ENCODE measurements at regions of chr10 and their contacts with region 1.

Region 1: DNA sequence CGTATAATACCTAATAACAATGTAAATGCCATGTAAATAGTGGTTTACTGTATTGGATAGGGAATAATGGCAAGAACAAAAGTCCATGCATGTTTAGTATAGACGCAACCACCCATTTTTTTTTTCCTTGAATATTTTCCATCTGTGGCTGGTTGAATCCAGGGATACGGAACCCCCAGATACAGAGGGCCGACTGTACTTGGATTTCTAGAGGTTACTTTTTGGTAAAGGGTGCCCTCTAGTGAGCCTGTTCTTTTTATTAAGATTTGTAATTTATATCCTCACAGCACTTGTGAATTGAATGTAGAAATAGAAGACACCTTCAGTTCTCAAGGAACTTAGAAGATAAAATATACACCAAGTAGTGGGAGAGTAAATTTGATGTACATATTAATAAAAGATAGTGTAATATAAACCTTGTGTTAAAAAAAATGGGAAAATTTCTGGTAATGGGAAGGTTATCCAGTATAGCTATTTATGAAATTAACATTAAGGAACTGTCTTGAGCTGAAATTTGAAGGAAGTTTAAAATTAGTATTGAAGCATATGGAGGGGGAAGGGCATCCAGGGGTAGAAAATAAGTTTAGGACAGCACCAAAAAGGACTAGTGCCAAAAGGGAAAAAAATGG is 32.0 kb downstream of the EXOC6 start:
- DNase-seq: no peak
- ATAC-seq: no peak
- H3K4me3 Mint-ChIP-seq: no peak overlapping the region
- H3K27ac Mint-ChIP-seq: no peak overlapping the region
- H3K4me1 Mint-ChIP-seq: peaks cover 27% of the 10 kb centered on the region
- H3K27me3 Mint-ChIP-seq: no peaks in the 10 kb centered on the region

Region 2: GRCh38 chr10:92517034-92517655 is 363.2 kb before region 1 on chr10:
- CTCF ChIA-PET with region 1: no interaction called
- POLR2A ChIA-PET with region 1: no interaction called
- intact Hi-C with region 1: loop called (anchors 1 to 5 kb)
- DNase-seq: peak; percentile 77
- ATAC-seq: peak; percentile 92
- H3K4me3 Mint-ChIP-seq: no peak overlapping the region
- H3K27ac Mint-ChIP-seq: no peak overlapping the region
- H3K4me1 Mint-ChIP-seq: peaks cover 6% of the 10 kb centered on the region
- H3K27me3 Mint-ChIP-seq: no peaks in the 10 kb centered on the region

Region 3: GRCh38 chr10:92839191-92840085 is 40.9 kb before region 1 on chr10:
- CTCF ChIA-PET with region 1: interaction called, 24 read pairs
- POLR2A ChIA-PET with region 1: interaction called, 3 read pairs
- intact Hi-C with region 1: loop called (anchors 1 kb)
- DNase-seq: peak; percentile 84
- ATAC-seq: peak; percentile 77
- H3K4me3 Mint-ChIP-seq: no peak overlapping the region
- H3K27ac Mint-ChIP-seq: no peak overlapping the region
- H3K4me1 Mint-ChIP-seq: peaks cover 2% of the 10 kb centered on the region
- H3K27me3 Mint-ChIP-seq: no peaks in the 10 kb centered on the region

Region 4: DNA sequence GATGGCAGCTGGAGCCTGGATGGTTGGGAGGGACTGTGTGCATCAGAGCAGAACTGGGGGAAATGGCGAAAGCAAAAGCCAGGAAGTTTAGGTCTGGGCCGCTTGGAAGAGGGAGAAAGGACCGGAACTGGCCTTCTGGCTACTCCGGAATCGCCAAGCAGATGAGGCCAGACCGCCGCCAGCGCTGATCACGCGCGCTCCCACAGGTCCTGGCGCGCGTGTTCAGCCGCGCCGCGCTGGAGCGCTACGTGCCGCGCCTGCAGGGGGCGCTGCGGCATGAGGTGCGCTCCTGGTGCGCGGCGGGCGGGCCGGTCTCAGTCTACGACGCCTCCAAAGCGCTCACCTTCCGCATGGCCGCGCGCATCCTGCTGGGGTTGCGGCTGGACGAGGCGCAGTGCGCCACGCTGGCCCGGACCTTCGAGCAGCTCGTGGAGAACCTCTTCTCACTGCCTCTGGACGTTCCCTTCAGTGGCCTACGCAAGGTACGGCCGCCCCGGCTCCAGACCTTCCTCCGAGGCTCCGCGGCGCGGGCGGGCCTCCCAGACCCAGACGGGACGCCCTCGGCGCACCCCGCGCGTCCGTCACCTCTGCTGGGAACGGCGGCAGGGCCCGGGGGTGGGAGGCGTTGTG is 182.3 kb after region 1 on chr10:
- CTCF ChIA-PET with region 1: no interaction called
- POLR2A ChIA-PET with region 1: no interaction called
- intact Hi-C with region 1: loop called in 1 of 2 experiments (anchors 10 kb)
- DNase-seq: peak; percentile 81
- ATAC-seq: peak; percentile 91
- H3K4me3 Mint-ChIP-seq: peak overlapping the region; percentile 66
- H3K27ac Mint-ChIP-seq: no peak overlapping the region
- H3K4me1 Mint-ChIP-seq: peaks cover 21% of the 10 kb centered on the region
- H3K27me3 Mint-ChIP-seq: peaks cover 53% of the 10 kb centered on the region

Measured in activated CD4-positive, alpha-beta T cell treated with anti-CD3 and anti-CD28 coated beads for 36 hours (primary cell).